T-cell (primary cell): ENCODE measurements at regions of chr7 and their contacts with region 1.

Region 1: GRCh38 chr7:128209229-128210035 is 31.6 kb upstream of the LEP start:
- DNase-seq: peak; percentile 25 to 87 (median 58)
- ATAC-seq: peak; percentile 73 to 82 (median 80)
- H3K4me3 ChIP-seq: no peak overlapping the region
- H3K4me3 Mint-ChIP-seq: no peak overlapping the region
- H3K27ac ChIP-seq: no peak overlapping the region
- H3K27ac Mint-ChIP-seq: no peak overlapping the region
- H3K4me1 ChIP-seq: no peaks in the 10 kb centered on the region
- H3K4me1 Mint-ChIP-seq: peaks cover 0 to 6% (median 0%) of the 10 kb centered on the region in 3 donors
- H3K27me3 ChIP-seq: peaks cover 0 to 63% of the 10 kb centered on the region in 2 experiments
- H3K27me3 Mint-ChIP-seq: peaks cover 11 to 29% of the 10 kb centered on the region in 2 donors

Region 2: GRCh38 chr7:127447326-127447945 is 762.0 kb before region 1 on chr7:
- CTCF ChIA-PET with region 1: interaction called in 1 of 2 experiments, 10 read pairs
- POLR2A ChIA-PET with region 1: interaction called in 1 of 2 experiments, 4 read pairs
- DNase-seq: peak in 34 of 35 experiments; percentile 13 to 77 (median 38)
- ATAC-seq: peak; percentile 80 to 95 (median 88)
- H3K4me3 ChIP-seq: no peak overlapping the region
- H3K4me3 Mint-ChIP-seq: no peak overlapping the region
- H3K27ac ChIP-seq: no peak overlapping the region
- H3K27ac Mint-ChIP-seq: peak overlapping the region; percentile 59 to 68
- H3K4me1 ChIP-seq: peaks cover 0 to 13% of the 10 kb centered on the region in 2 experiments
- H3K4me1 Mint-ChIP-seq: peaks cover 21 to 31% (median 30%) of the 10 kb centered on the region in 3 donors
- H3K27me3 ChIP-seq: peaks cover 2 to 17% of the 10 kb centered on the region in 2 experiments
- H3K27me3 Mint-ChIP-seq: peaks cover 5 to 17% of the 10 kb centered on the region in 2 donors

Region 3: DNA sequence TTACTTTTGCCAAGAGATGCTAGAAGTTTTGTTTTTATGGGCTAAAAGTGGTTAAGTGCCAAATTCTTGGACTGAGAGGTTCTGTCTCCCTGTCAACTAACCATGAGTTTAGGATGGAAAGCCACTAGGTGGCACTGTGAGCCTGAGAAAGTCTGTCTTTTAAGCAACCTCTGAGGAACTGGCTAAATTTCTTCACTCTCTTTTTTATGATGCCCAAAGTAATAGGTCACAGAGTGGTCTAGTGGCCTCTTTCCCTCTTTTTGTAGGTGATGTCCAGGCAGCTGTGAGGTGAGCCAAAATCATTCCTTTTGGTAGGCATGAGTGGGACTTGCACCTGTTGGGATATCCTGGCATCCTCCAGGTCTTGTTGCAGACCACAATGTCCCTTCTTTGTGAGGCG is 500.6 kb before region 1 on chr7:
- CTCF ChIA-PET with region 1: interaction called, 73 to 142 read pairs
- POLR2A ChIA-PET with region 1: no interaction called
- DNase-seq: peak; percentile 32 to 84 (median 62)
- ATAC-seq: peak; percentile 57 to 69 (median 64)
- H3K4me3 ChIP-seq: no peak overlapping the region
- H3K4me3 Mint-ChIP-seq: no peak overlapping the region
- H3K27ac ChIP-seq: no peak overlapping the region
- H3K27ac Mint-ChIP-seq: no peak overlapping the region
- H3K4me1 ChIP-seq: no peaks in the 10 kb centered on the region
- H3K4me1 Mint-ChIP-seq: no peaks in the 10 kb centered on the region
- H3K27me3 ChIP-seq: no peaks in the 10 kb centered on the region
- H3K27me3 Mint-ChIP-seq: no peaks in the 10 kb centered on the region

Region 4: GRCh38 chr7:128135515-128136214 is 73.8 kb before region 1 on chr7:
- CTCF ChIA-PET with region 1: interaction called, 8 to 19 read pairs
- POLR2A ChIA-PET with region 1: interaction called in 1 of 2 experiments, 3 read pairs
- DNase-seq: peak in 33 of 35 experiments; percentile 19 to 75 (median 46)
- ATAC-seq: peak; percentile 95 to 97 (median 96)
- H3K4me3 ChIP-seq: peak overlapping the region; percentile 61 to 62
- H3K4me3 Mint-ChIP-seq: peak overlapping the region; percentile 74 to 80 (median 77)
- H3K27ac ChIP-seq: no peak overlapping the region
- H3K27ac Mint-ChIP-seq: no peak overlapping the region
- H3K4me1 ChIP-seq: peaks cover 4 to 24% of the 10 kb centered on the region in 2 experiments
- H3K4me1 Mint-ChIP-seq: peaks cover 16 to 22% (median 17%) of the 10 kb centered on the region in 3 donors
- H3K27me3 ChIP-seq: peaks cover 0 to 43% of the 10 kb centered on the region in 2 experiments
- H3K27me3 Mint-ChIP-seq: peaks cover 25 to 37% of the 10 kb centered on the region in 2 donors

Region 5: GRCh38 chr7:128398016-128398840 is 188.8 kb after region 1 on chr7:
- CTCF ChIA-PET with region 1: interaction called in 1 of 2 experiments, 14 read pairs
- POLR2A ChIA-PET with region 1: no interaction called
- DNase-seq: peak in 10 of 35 experiments; percentile 13 to 61 (median 32)
- ATAC-seq: peak; percentile 32 to 61 (median 53)
- H3K4me3 ChIP-seq: no peak overlapping the region
- H3K4me3 Mint-ChIP-seq: no peak overlapping the region
- H3K27ac ChIP-seq: no peak overlapping the region
- H3K27ac Mint-ChIP-seq: no peak overlapping the region
- H3K4me1 ChIP-seq: no peaks in the 10 kb centered on the region
- H3K4me1 Mint-ChIP-seq: peaks cover under 1 to 7% (median 2%) of the 10 kb centered on the region in 3 donors
- H3K27me3 ChIP-seq: no peaks in the 10 kb centered on the region
- H3K27me3 Mint-ChIP-seq: no peaks in the 10 kb centered on the region

Region 6: GRCh38 chr7:128409596-128410160 is 200.2 kb after region 1 on chr7 and contains the start of gene IMPDH1:
- CTCF ChIA-PET with region 1: no interaction called
- POLR2A ChIA-PET with region 1: no interaction called
- DNase-seq: peak; percentile 55 to 88 (median 72)
- ATAC-seq: peak; percentile 81 to 84 (median 82)
- H3K4me3 ChIP-seq: peak within 1 kb of the TSS; percentile 77 to 86
- H3K4me3 Mint-ChIP-seq: peak within 1 kb of the TSS; percentile 88 to 92 (median 91)
- H3K27ac ChIP-seq: peak within 1 kb of the TSS; percentile 85
- H3K27ac Mint-ChIP-seq: peak within 1 kb of the TSS; percentile 91 to 92
- H3K4me1 ChIP-seq: peaks cover 14 to 50% of the 10 kb centered on the region in 2 experiments
- H3K4me1 Mint-ChIP-seq: peaks cover 33 to 40% (median 39%) of the 10 kb centered on the region in 3 donors
- H3K27me3 ChIP-seq: peaks cover 0 to 2% of the 10 kb centered on the region in 2 experiments
- H3K27me3 Mint-ChIP-seq: no peaks in the 10 kb centered on the region
- total RNA-seq, gene IMPDH1: 39.9 to 73.3 (median 65.6) TPM